Activated naive CD4-positive, alpha-beta T cell treated with anti-CD3 and anti-CD28 coated beads for 36 hours (primary cell): ENCODE measurements at regions of chr10 and their contacts with region 1.

Region 1: DNA sequence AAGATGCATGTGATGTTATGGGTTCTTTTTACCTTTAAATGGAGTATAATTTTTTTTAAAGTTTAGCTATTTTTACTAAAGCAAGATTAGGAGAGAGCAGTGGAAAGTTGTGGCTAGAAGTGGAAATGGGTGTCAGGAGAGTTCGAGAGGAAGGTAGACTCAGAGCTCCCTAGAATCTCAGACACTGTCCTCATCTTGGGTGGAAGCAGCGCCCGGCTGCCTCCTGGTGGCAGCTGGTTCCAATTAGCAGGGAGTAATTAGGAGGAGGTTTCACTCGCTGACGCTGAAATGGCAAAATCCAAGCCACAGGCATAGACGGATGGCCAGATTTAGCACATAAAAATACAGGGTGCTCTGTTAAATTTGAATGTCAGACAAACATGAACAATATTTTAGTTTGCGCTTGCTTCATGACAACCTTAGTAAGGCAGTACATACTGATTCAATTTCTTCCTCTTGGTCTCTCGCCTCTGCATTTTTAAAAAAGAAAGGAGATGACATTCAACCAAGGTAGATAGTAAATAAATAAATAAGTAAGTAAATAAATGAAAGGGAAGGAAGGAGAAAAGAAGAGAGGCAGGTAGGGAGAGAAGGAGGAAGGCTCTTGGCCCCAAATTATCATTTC is 58.5 kb downstream of the LGI1 start:
- DNase-seq: peak; percentile 66
- H3K4me3 Mint-ChIP-seq: no peak overlapping the region
- H3K27ac Mint-ChIP-seq: no peak overlapping the region
- H3K4me1 Mint-ChIP-seq: peaks cover 4% of the 10 kb centered on the region
- H3K27me3 Mint-ChIP-seq: peaks cover 31% of the 10 kb centered on the region

Region 2: GRCh38 chr10:93554760-93555432 is 261.3 kb before region 1 on chr10:
- CTCF ChIA-PET with region 1: interaction called, 4 read pairs
- intact Hi-C with region 1: loop called (anchors 1 kb)
- DNase-seq: peak; percentile 64
- H3K4me3 Mint-ChIP-seq: no peak overlapping the region
- H3K27ac Mint-ChIP-seq: no peak overlapping the region
- H3K4me1 Mint-ChIP-seq: no peaks in the 10 kb centered on the region
- H3K27me3 Mint-ChIP-seq: peaks cover 10% of the 10 kb centered on the region

Region 3: DNA sequence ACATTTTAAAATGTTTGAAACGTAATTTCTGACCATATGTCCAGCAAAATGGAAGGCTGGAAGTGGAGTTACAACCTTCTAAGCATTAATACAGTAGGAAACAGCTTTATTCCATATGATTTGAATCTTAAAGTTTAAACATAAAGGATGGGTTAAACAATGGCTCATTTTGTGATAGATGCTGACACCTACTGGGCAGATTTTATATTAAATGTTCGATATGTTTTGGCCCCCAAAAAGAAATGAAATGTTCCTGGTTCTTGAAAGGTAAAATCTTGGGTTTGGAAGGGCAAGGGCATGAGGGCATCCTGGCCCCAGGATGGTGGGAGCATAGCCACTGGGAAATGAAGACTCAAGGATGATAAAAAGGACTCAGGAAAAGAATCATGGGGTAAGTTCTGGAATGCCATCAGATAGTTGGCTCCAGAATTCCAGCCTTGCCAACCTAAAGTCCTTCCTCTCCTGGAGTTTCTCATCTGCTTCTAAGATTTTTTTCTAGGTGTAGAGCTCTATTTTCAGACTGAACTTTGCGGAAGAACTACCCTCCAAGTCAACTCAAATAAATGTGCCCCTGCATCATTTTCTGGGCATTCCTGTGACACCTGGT is 42.9 kb after region 1 on chr10:
- CTCF ChIA-PET with region 1: interaction called, 5 read pairs
- intact Hi-C with region 1: loop called (anchors 5 kb)
- DNase-seq: no peak
- H3K4me3 Mint-ChIP-seq: no peak overlapping the region
- H3K27ac Mint-ChIP-seq: no peak overlapping the region
- H3K4me1 Mint-ChIP-seq: no peaks in the 10 kb centered on the region
- H3K27me3 Mint-ChIP-seq: peaks cover 2% of the 10 kb centered on the region

Region 4: DNA sequence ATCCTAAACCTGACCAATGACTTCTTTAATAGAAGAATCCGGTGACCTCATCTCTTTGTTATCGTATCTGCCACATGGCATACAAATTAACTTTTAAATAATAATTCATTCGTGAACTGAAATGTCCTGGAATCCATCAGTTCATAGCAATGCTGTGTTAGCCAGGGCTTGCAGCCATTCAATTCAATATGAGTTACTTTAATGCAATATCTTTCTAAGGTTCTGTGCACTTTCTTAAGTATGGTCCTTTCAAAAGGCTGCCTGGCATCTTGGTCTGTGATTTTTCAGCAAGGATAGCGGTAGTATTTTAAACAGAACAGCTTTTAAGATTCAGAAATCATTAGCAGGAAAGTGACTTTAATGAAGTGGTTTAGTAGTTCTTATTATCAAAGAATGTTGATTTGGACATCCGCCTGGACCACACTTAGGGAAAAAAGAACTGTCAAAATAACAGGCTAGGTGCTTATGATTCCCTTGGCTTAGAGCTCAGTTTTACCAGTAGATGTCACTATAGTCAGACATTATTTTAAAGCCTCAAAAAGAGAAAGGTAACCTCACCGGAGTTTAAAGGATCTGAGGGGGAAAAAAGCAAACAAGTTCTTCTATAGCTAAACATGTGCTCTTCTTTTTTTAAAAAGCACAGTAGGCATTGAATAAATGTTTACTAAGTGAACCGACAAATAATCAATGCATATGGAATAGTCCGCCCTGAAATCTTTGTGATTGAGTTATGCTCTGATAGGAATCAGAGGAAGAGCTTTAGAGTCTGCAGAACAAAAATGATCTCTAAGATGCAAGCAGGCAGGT is 100.2 kb after region 1 on chr10:
- CTCF ChIA-PET with region 1: no interaction called
- intact Hi-C with region 1: loop called (anchors 2 kb)
- DNase-seq: no peak
- H3K4me3 Mint-ChIP-seq: no peak overlapping the region
- H3K27ac Mint-ChIP-seq: no peak overlapping the region
- H3K4me1 Mint-ChIP-seq: no peaks in the 10 kb centered on the region
- H3K27me3 Mint-ChIP-seq: no peaks in the 10 kb centered on the region

Region 5: GRCh38 chr10:94439275-94439861 is 623.1 kb after region 1 on chr10:
- CTCF ChIA-PET with region 1: no interaction called
- intact Hi-C with region 1: loop called (anchors 5 kb)
- DNase-seq: no peak
- H3K4me3 Mint-ChIP-seq: no peak overlapping the region
- H3K27ac Mint-ChIP-seq: no peak overlapping the region
- H3K4me1 Mint-ChIP-seq: no peaks in the 10 kb centered on the region
- H3K27me3 Mint-ChIP-seq: peaks cover 17% of the 10 kb centered on the region